Heart left ventricle (tissue), 16 donors: ENCODE measurements at regions of chr12 and their contacts with region 1.

Region 1: DNA sequence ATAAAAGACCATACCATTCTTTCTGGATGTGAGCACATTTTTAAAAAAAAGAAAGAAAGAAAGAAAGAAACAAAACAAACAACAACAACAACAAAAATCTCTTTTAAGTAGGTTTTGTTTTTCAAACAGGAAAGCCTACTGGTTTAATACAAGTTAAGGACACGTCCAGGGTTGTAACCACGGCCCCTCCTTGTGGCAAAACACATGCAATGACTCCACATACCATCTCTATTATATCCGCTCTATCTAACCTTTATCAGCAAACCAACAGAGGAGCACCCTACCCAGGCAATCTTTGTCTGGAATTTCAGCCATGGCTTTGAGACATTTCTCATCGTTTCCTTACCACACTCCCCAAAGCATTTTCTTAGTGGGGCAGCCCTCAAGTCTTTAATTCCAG is 360.5 kb upstream of the TMPO start:
- DNase-seq: peak in 1 of 5 donors; percentile 14
- ATAC-seq: no peak
- H3K4me3 ChIP-seq: no peak overlapping the region
- H3K27ac ChIP-seq: no peak overlapping the region
- H3K4me1 ChIP-seq: peaks cover 0 to 6% (median 0%) of the 10 kb centered on the region in 12 donors
- H3K27me3 ChIP-seq: peaks cover 0 to 2% (median 0%) of the 10 kb centered on the region in 9 donors
- CTCF ChIP-seq: peak; percentile 8 to 61 (median 40)
- POLR2A ChIP-seq: no peak

Region 2: GRCh38 chr12:97308576-97309198 is 846.2 kb before region 1 on chr12:
- intact Hi-C with region 1: loop called in 1 of 10 experiments (anchors 5 kb)
- DNase-seq: no peak
- ATAC-seq: no peak
- H3K4me3 ChIP-seq: no peak overlapping the region
- H3K27ac ChIP-seq: no peak overlapping the region
- H3K4me1 ChIP-seq: peaks cover 0 to 10% (median 0%) of the 10 kb centered on the region in 12 donors
- H3K27me3 ChIP-seq: peaks cover 0 to 6% (median 0%) of the 10 kb centered on the region in 9 donors
- CTCF ChIP-seq: peak; percentile 50 to 81 (median 73)
- POLR2A ChIP-seq: no peak

Region 3: DNA sequence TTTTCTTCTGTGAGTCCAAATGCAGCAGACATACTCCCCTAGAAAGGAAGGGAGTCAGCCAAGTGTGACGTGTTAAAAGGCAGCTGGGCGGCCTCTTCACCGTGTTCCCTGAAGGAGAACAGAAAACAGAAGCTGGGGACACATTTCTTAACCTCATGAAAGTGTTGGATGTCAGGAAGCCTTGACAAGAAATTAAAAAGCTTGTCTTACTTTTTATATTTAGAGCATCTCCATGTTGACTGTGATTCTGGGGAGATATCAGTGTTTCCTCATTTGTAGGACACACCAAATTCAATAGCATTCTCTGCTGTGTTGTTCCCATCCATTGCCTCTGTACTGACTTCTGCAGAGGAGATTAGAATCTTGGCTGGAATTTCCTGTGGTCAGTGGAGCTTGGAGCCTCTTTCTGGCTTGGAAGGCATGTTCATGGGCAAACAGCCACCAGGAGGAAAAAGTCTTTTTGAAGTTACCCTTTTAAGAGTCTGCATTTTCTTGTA is 598.5 kb before region 1 on chr12:
- intact Hi-C with region 1: loop called in 2 of 10 experiments (anchors 5 to 10 kb)
- DNase-seq: peak in 4 of 5 donors; percentile 18 to 38 (median 34)
- ATAC-seq: peak; percentile 67 to 89 (median 82)
- H3K4me3 ChIP-seq: peak overlapping the region in 1 of 12 donors; percentile 4
- H3K27ac ChIP-seq: peak overlapping the region in 10 of 12 donors; percentile 2 to 74 (median 52)
- H3K4me1 ChIP-seq: peaks cover 0 to 12% (median 0%) of the 10 kb centered on the region in 12 donors
- H3K27me3 ChIP-seq: no peaks in the 10 kb centered on the region
- CTCF ChIP-seq: peak in 1 of 12 donors; percentile 11
- POLR2A ChIP-seq: no peak

Region 4: GRCh38 chr12:97984974-97985580 is 169.8 kb before region 1 on chr12:
- intact Hi-C with region 1: loop called in 2 of 10 experiments (anchors 10 kb)
- DNase-seq: no peak
- ATAC-seq: no peak
- H3K4me3 ChIP-seq: no peak overlapping the region
- H3K27ac ChIP-seq: no peak overlapping the region
- H3K4me1 ChIP-seq: peaks cover 0 to 4% (median 0%) of the 10 kb centered on the region in 12 donors
- H3K27me3 ChIP-seq: no peaks in the 10 kb centered on the region
- CTCF ChIP-seq: no peak
- POLR2A ChIP-seq: no peak

Region 5: DNA sequence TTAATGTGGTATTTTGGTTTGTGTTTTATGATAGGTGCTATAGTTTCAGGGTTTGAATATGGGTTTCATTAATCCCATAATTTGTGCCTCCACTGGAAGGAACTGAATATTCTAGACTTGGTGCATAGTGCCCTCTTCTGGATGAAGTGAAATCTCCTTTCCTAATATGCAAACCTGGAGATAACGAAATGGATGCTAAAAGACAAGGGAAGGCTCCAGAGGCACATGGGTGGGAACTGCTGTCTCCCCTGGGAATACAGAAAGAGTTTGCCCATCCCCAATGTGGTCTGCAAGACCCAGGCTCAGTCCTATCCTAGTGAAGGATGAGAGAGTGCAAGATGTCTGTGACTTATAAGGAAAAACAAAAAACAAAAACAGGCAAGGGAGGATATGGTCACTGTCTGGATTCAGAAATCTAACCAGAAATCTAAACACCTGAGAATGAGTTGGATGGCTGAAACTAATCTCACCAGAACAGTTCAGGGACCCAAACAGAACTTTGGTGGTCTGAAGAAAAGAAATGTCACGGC is 218.2 kb after region 1 on chr12:
- intact Hi-C with region 1: loop called in 1 of 10 experiments (anchors 10 kb)
- DNase-seq: no peak
- ATAC-seq: no peak
- H3K4me3 ChIP-seq: no peak overlapping the region
- H3K27ac ChIP-seq: no peak overlapping the region
- H3K4me1 ChIP-seq: peaks cover 0 to 8% (median 0%) of the 10 kb centered on the region in 12 donors
- H3K27me3 ChIP-seq: peaks cover 0 to 4% (median 0%) of the 10 kb centered on the region in 9 donors
- CTCF ChIP-seq: peak; percentile 24 to 63 (median 42)
- POLR2A ChIP-seq: no peak